Head of caudate nucleus (tissue), 42 donors: ENCODE measurements at regions of chr10 and their contacts with region 1.

Region 1: DNA sequence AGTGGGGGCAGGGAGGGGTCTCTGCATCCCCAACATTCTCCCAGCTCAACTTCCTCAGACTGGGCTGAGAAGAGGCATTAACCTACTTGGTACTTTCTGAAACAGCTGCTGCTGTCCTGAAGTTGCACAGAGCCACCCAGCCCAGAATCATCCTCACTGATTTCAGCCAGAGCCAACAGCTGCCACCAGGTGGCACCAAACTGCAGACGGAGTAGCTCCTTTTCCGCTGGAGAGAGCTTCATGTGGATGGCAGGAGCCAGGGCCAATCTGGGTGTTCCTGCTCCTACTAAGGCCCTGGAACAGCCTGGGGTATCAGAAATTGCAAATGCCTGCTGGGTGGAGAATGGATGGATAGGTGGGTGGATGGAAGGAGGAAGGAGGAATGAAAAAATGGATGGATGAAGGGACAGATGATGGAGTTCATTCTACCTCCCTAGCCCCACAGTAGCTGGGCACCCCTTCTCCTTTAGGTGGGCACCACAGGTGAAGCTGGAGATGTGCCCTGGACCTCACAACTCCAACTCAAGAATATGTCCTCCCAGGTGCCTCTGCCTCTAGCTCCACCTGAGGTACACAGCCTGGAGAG is 11.8 kb upstream of the DRGX start:
- DNase-seq: peak; percentile 65 to 93 (median 86)

Region 2: GRCh38 chr10:48900371-48900801 is 507.3 kb before region 1 on chr10:
- intact Hi-C with region 1: no loop called
- DNase-seq: peak in 1 of 42 donors; percentile 41

Region 3: DNA sequence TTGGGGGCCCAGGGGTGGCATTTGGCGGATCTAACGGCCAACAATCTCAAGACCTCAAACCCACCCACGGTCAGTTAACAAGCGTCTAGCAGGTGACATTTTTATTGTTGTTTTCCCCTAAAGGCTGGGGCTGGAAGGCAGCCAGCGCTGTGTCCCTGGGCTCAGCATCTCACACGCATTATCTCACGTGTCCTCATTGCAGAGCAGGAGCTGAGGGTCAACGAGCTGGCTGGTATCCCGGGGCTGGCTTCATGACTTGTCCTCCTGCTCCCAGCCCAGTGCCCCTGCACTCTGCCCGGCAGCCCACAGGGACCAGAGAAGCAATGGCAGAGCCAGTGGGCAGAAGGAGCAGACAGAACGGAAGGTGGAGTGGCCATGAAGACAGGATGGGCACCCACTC is 165.0 kb before region 1 on chr10:
- intact Hi-C with region 1: no loop called
- DNase-seq: no peak

Region 4: GRCh38 chr10:49324711-49325110 is 82.9 kb before region 1 on chr10:
- intact Hi-C with region 1: no loop called
- DNase-seq: peak in 3 of 42 donors; percentile 26 to 44 (median 32)

Region 5: GRCh38 chr10:49512121-49512809 is 104.6 kb after region 1 on chr10:
- intact Hi-C with region 1: loop called (anchors 5 kb)
- DNase-seq: no peak